ENCODE measurements at regions of chr11 and their contacts with region 1.

Region 1: DNA sequence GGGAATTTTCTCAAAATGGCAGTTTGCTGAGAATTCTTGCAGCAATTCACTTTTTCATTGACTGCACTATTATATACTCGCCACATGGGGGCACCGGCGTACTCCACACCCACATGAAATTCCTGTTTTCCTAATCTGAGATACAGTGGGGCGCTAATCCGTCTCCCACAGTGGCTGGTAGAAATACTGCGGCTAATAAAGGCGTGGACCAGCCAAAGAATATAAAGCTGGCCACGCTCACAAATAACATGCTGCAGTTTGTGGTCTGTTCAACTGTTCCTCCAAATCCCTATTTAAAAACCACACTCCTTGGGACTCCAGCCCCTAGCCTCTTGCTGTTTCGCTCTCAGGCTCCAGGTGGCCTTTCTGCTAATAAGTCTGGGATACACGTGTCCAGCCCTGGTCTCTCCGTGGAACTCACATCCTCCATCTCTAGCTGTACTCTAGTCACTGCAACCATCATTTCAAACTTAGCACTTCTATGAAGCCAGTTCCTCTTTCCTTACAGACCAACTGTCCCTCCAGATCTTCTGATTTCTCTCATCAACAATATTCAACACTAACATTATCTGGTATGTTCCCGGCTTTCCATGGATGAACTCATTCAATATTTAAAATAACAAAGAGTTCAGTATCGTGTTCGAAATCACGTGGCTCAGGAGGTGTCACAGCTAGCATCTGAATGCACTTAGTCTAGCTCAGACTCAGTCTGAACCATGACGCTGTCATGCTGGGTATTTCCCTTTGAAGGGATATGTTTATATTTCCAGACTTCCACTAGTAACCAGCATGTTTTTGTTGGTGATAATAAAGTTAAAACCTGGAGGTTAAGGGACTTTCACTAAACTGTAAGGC is 22.0 kb downstream of the TBRG1 start:
- DNase-seq: peak; percentile 28
- H3K4me3 ChIP-seq: peak overlapping the region; percentile 36
- CTCF ChIP-seq: peak; percentile 68

Region 2: DNA sequence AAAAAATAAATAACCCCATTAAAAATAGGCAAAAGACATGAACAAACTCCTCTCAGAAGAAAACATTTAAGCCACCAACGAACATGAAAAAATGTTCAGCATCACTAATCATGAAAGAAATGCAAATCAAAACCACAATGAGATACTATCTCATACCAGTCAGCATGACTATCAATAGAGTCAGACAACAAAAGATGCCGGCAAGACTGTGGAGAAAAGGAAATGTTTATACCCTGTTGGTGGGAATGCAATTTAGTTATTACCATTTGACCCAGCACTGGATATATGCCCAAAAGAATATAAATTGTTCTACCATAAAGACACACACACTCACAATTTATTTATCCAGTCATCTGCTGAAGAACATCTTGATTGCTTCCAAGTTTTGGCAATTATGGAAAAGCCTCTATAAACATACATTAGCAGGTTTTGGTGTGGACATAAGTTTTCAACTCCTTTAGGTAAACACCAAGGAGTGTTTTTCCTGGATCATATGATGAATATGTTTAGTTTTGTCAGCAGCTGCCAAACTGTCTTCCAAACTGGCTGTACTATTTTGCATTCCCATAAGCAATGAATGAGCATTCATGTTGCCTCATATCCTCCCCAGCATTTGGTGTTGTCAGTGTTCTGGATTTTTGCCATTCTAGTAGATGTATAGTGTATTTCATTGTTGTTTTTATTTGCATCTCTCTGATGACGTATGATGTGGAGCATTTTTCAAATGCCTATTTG is 358.9 kb before region 1 on chr11:
- CTCF ChIA-PET with region 1: no interaction called
- POLR2A ChIA-PET with region 1: no interaction called
- DNase-seq: peak; percentile 44
- H3K4me3 ChIP-seq: no peak overlapping the region
- CTCF ChIP-seq: no peak

Region 3: DNA sequence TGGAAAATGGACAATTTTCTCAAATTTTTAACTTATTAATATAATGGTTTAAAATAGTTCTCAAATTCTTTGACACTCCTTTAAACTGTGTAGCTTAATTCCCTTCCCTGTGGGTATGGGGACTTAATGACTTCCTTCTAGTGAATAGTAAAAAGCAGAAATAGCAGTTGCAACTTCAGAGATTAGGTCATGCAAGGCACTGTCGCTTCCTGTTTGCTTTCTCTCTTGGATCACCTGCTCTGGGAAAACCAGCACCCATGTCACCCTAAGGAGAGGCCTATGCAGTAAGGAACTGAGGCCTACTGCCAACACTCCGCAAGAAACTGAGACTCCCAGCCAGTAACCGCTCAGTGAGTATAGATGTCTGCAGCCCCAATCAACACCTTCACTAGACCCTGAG is 38.9 kb before region 1 on chr11:
- CTCF ChIA-PET with region 1: no interaction called
- POLR2A ChIA-PET with region 1: no interaction called
- DNase-seq: no peak
- H3K4me3 ChIP-seq: no peak overlapping the region
- CTCF ChIP-seq: no peak

Region 4: DNA sequence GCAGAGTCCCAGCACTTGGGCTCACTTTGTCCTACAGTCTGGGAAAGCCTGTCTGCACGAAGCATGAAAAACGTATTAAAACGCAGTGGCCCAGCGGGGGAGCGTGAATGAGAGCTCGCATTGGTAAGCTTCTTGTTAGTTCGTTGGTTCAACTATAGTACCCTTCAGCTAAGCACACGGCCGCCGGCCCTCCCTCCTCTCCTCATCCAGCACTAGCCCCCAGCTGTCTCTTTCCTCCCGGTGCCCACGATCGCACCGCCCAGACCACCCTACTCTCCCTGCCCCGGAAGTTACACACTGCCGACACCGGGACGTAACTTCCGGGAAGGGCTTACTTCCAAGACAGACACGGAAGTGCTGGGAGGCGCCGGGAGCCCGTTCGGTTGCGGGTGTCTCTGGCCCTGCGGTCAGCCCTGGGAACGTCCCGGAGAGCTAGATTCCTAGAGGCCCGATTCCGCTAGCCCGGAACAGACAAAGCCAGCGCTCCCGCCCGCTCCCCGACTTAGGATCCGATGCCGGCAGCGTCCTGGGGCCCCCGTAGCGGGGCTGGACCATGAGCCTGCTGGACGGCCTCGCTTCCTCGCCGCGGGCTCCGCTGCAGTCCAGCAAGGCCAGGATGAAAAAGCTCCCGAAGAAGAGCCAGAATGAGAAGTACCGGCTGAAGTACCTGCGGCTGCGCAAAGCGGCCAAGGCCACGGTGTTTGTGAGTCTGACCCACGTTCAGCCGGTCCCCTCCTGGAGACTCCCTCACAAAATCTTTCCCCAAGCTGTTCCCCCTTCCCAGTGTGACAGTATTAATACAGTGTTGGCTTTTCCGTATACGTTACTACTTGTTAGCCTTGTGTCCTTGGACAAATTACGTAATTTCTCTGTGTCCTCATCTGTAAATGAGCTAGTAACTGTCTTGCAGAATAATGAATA is 21.9 kb before region 1 on chr11 and contains the start of gene TBRG1:
- CTCF ChIA-PET with region 1: interaction called, 35 read pairs
- POLR2A ChIA-PET with region 1: interaction called, 10 read pairs
- DNase-seq: peak; percentile 42
- H3K4me3 ChIP-seq: peak within 1 kb of the TSS; percentile 87
- CTCF ChIP-seq: no peak

Region 5: DNA sequence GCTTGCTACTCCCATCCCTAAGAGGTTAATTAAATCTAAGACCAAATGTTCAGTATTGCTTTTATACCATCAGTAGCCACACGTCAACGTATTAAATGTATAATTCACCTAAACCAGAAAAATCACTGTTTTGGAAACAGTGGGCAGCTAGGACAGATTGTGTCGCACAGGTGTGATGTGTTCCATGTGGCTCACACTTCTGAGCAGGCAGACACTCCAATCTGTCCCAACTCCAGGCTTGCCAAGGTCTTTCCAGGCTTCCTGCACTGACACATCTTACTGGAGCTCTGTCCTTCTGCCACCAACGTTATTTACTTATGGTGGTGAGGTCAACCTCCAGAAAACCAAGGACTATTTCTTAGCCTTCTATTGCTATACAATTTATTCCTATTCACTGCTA is 17.5 kb after region 1 on chr11:
- CTCF ChIA-PET with region 1: interaction called, 35 read pairs
- POLR2A ChIA-PET with region 1: no interaction called
- DNase-seq: no peak
- H3K4me3 ChIP-seq: no peak overlapping the region
- CTCF ChIP-seq: no peak

Region 6: DNA sequence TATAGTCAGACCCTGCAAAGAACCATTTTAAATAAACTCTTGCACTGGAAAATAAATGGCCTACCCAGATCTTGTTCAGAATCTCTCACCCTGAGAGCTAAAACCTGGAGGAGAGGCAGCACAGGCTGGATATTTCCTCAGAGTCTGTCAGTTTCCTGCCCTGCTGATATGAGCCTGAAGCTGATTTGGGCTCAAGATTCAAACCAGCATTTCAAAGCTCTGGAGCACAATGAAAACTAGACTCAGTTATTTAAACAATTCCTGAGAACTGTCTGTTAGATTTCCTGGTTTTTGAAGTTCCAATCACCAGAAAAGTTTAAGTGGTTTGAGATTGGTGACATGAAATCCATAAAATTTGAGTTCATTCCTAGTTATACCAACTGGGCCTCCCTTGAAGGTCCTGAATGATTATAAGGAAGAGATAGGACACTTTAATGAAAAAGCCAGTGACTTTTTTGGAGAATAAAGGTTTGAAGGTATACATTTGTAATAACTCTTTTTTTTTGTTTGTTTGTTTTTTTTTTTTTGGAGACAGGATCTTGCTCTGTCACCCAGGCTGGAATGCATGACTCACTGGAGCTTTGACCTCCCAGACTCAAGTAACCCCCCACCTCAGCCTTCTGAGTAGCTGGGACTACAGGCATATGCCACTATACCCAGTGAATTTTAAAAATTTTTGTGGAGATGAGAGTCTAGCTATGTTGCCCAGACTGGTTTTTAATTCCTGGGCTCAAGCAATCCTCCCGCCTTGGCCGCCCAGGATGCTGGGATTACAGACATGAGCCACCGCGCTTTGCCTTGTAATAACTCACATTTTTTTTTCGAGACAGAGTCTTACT is 125.4 kb after region 1 on chr11:
- CTCF ChIA-PET with region 1: interaction called, 35 read pairs
- POLR2A ChIA-PET with region 1: no interaction called
- DNase-seq: no peak
- H3K4me3 ChIP-seq: no peak overlapping the region
- CTCF ChIP-seq: no peak

Region 7: DNA sequence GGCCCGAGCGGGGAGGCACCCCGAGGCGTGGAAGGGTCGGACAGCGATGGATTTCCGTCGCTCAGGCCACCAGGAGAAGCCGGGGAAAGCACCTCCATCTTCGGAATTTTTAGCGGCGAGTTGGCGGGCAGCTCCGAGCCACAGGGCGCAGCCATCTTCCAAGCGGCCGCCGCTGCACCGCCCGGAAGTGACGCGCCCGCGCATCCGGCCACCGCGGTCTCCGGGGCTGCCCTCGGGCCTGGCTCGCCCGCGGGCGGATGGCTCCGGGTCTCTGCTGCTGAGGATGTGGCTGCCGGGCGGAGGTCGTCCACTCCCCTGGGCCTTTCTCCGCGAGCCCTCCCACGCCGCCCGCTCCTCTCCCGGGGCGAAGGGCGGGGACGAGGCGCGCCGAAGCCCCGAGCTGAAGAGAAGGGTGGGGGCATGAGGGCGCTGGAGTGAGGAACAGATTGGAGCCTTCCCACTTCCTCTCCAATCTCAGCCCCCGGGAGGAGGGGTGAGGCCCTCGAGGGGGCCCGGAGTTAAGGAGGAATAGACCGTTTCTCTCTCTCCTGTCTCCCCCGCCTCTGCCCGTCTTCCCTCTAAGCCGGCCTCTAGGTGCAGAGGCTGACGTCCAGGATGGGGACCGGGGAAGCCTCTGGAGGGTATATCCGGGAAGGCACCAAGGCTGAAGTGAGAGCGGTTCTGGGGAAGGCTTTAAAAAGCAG is 155.7 kb after region 1 on chr11 and contains the start of gene MSANTD2:
- CTCF ChIA-PET with region 1: interaction called, 26 read pairs
- POLR2A ChIA-PET with region 1: no interaction called
- DNase-seq: peak; percentile 17
- H3K4me3 ChIP-seq: peak within 1 kb of the TSS; percentile 82
- CTCF ChIP-seq: no peak

Region 8: DNA sequence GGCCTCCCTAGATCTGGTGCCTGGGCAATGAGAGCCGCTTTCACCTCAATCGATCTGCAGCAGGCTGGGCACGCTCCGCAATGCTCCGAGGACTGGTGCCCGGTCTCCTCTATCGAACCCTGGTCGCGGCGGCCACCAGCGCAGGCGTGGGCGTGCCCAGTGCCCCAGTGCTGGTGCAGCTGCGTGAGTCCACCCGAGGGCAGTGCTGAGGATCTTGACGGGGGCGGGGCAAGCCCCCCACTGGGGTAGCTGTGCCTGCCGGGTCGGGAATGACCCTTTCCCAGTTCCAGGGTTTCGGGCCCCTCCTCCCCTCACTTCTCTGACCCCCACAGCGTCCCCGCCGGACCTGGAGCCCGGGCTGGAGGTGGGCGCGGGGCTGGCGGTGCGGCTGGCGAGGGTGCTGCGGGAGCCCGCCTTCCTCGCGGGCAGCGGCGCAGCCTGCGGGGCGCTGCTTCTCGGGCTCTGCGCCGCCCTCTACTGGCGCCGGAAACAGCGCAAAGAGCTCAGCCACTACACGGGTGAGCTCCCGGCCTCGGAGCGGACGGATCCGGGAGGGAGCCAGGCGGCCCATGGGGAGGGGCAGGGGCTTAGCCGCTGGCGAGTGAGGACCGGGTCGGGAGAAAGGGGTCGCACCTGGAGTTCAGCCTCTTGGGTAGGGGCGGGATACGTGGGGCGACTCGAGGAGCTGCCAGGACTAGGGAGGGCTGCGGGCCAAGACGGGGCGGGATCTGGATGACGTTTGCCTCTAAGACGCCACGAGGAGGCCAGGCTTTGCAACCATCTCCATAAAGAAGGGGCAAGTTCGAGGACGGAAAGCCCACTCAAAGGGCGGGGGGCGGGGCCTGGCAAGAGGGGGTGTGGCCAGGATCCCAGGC is 231.5 kb after region 1 on chr11:
- CTCF ChIA-PET with region 1: interaction called, 17 read pairs
- POLR2A ChIA-PET with region 1: no interaction called
- DNase-seq: peak; percentile 53
- H3K4me3 ChIP-seq: peak overlapping the region; percentile 72
- CTCF ChIP-seq: peak; percentile 94